ENCODE measurements at regions of chr11 and their contacts with region 1.

Region 1: DNA sequence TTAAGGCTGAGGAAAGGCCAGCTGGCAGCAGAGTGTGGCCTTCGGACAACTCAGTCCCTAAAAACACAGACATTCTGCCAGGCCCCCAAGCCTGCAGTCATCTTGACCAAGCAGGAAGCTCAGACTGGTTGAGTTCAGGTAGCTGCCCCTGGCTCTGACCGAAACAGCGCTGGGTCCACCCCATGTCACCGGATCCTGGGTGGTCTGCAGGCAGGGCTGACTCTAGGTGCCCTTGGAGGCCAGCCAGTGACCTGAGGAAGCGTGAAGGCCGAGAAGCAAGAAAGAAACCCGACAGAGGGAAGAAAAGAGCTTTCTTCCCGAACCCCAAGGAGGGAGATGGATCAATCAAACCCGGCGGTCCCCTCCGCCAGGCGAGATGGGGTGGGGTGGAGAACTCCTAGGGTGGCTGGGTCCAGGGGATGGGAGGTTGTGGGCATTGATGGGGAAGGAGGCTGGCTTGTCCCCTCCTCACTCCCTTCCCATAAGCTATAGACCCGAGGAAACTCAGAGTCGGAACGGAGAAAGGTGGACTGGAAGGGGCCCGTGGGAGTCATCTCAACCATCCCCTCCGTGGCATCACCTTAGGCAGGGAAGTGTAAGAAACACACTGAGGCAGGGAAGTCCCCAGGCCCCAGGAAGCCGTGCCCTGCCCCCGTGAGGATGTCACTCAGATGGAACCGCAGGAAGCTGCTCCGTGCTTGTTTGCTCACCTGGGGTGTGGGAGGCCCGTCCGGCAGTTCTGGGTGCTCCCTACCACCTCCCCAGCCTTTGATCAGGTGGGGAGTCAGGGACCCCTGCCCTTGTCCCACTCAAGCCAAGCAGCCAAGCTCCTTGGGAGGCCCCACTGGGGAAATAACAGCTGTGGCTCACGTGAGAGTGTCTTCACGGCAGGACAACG is 11.7 kb downstream of the CXCR5 start:
- DNase-seq: peak; percentile 90
- H3K4me3 ChIP-seq: peak overlapping the region; percentile 57
- H3K27ac ChIP-seq: peak overlapping the region; percentile 91
- H3K4me1 ChIP-seq: peaks cover 83% of the 10 kb centered on the region
- CTCF ChIP-seq: peak; percentile 45

Region 2: DNA sequence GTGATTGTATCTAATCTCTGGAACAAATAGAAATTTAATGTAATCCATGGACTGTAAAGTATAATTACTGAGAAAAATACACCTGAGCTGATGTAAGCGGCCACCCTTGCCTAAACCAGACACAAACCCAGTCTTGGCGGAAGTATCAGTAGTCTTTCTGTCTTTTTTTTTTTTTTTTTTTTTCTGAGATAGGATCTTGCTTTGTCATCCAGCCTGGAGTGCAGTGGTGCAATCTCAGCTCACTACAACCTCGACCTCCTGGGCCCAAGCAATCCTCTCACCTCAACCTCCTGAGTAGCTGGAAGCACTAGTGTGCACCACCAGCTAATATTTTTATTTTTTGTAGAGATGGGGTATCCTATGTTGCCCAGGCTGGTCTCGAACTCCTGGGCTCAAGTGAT is 17.2 kb before region 1 on chr11:
- CTCF ChIA-PET with region 1: interaction called, 8 read pairs
- POLR2A ChIA-PET with region 1: interaction called, 26 read pairs
- intact Hi-C with region 1: no loop called
- DNase-seq: peak; percentile 50
- H3K4me3 ChIP-seq: no peak overlapping the region
- H3K27ac ChIP-seq: peak overlapping the region; percentile 68
- H3K4me1 ChIP-seq: peaks cover 58% of the 10 kb centered on the region
- CTCF ChIP-seq: no peak

Region 3: DNA sequence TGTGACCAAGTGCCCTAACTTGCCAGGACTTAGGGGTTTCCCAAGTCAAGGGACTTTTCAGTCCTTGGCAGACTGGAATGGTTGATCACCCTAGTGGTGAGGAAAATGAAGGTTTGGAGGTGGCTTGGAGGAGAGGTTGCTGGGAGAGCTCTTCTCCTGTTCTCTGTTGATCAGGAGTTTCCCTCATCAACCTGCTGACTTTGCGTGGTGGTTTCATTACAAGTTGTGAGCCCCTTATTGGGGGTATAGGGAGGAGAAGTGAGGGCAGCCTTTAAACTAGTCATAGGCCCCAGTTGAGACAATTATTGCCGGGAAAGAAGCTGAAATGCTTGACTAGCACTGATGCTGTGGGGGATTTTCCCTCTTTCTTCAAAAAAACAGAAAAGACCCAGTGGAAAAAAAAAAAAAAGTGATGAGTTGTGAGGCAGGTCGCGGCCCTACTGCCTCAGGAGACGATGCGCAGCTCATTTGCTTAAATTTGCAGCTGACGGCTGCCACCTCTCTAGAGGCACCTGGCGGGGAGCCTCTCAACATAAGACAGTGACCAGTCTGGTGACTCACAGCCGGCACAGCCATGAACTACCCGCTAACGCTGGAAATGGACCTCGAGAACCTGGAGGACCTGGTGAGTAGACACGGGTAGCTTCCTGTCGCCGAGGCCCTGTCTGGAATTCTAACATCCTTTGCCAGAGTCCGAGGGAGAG is 11.9 kb before region 1 on chr11 and contains the start of gene CXCR5:
- CTCF ChIA-PET with region 1: interaction called, 8 read pairs
- POLR2A ChIA-PET with region 1: interaction called, 26 read pairs
- intact Hi-C with region 1: no loop called
- DNase-seq: peak; percentile 89
- H3K4me3 ChIP-seq: peak within 1 kb of the TSS; percentile 61
- H3K27ac ChIP-seq: peak within 1 kb of the TSS; percentile 32
- H3K4me1 ChIP-seq: peaks cover 74% of the 10 kb centered on the region
- CTCF ChIP-seq: peak; percentile 40; the same call in 1 of the 2 replicates
- total RNA-seq, gene CXCR5: 1.4 and 3.3 TPM in 2 replicates

Region 4: GRCh38 chr11:118907051-118908042 is 12.0 kb after region 1 on chr11:
- CTCF ChIA-PET with region 1: interaction called, 5 read pairs
- POLR2A ChIA-PET with region 1: interaction called, 14 read pairs
- intact Hi-C with region 1: no loop called
- DNase-seq: peak; percentile 87
- H3K4me3 ChIP-seq: no peak overlapping the region
- H3K27ac ChIP-seq: no peak overlapping the region
- H3K4me1 ChIP-seq: peaks cover 47% of the 10 kb centered on the region
- CTCF ChIP-seq: peak; percentile 96

Region 5: GRCh38 chr11:118938491-118939403 is 43.4 kb after region 1 on chr11:
- CTCF ChIA-PET with region 1: no interaction called
- POLR2A ChIA-PET with region 1: no interaction called
- intact Hi-C with region 1: no loop called
- DNase-seq: no peak
- H3K4me3 ChIP-seq: no peak overlapping the region
- H3K27ac ChIP-seq: no peak overlapping the region
- H3K4me1 ChIP-seq: peaks cover 36% of the 10 kb centered on the region
- CTCF ChIP-seq: no peak

Region 6: GRCh38 chr11:119121008-119121810 is 225.8 kb after region 1 on chr11 and contains the start of gene HINFP:
- CTCF ChIA-PET with region 1: no interaction called
- POLR2A ChIA-PET with region 1: no interaction called
- intact Hi-C with region 1: no loop called
- DNase-seq: peak; percentile 99
- H3K4me3 ChIP-seq: peak within 1 kb of the TSS; percentile 84
- H3K27ac ChIP-seq: no peak within 1 kb of the TSS
- H3K4me1 ChIP-seq: peaks cover 16% of the 10 kb centered on the region
- CTCF ChIP-seq: no peak
- total RNA-seq, gene HINFP: 18.2 and 27.7 TPM in 2 replicates

Region 7: DNA sequence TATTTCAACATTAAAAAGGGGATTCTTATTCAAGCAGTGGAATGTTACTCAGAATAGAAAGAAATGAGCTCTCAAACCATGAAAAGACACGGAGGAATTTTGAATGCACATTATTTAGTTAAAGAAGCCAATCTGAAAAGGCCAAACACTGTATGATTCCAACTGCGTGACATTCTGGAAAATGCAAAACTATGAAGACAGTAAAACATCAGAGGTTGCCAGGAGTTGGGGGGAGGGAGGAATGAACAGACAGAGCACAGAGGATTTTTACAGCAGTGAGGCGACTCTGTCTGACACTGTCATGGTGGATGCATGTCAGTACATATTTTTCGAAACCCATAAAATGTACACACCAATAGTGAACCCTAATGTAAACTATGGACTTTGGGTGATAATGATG is 550.5 kb after region 1 on chr11:
- CTCF ChIA-PET with region 1: no interaction called
- POLR2A ChIA-PET with region 1: no interaction called
- intact Hi-C with region 1: no loop called
- DNase-seq: no peak
- H3K4me3 ChIP-seq: no peak overlapping the region
- H3K27ac ChIP-seq: no peak overlapping the region
- H3K4me1 ChIP-seq: peaks cover 21% of the 10 kb centered on the region
- CTCF ChIP-seq: no peak